Adrenal gland (tissue), 19 donors: ENCODE measurements at regions of chr16 and their contacts with region 1.

Region 1: DNA sequence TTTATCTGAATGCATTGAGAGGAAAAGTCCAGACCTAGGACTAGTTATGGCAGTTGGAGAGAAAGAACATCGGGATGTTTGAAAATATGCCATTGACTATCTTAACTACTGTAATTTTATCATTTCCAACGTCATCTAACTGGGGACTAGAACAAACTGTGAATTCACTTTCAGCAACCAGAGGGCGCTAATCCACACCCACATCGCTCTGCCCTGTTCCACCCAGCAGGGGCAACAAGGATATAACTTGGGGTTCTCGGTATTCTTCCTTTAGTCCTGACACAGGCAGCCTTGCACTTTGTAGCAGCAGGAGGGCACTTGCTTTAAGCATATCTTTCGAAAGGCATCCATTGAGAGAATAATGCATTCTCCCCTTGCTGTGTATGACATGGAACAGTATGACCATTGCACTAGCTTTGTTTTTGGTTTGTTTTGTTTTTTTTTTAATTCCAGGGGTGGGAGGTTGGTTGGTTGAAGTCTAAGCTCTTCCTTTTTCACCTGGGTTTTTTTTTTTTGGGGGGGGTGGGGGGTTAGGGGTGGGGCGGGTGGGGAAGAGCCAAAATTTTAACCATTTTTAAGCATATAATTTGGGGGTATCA is 31.5 kb downstream of the SIAH1 start:
- DNase-seq: peak; percentile 56 to 82 (median 69)
- H3K4me3 ChIP-seq: no peak overlapping the region
- H3K27ac ChIP-seq: no peak overlapping the region
- H3K4me1 ChIP-seq: peaks cover 0 to 16% of the 10 kb centered on the region in 2 donors
- H3K27me3 ChIP-seq: no peaks in the 10 kb centered on the region
- CTCF ChIP-seq: peak; percentile 73 to 99 (median 94)
- POLR2A ChIP-seq: no peak

Region 2: GRCh38 chr16:48609652-48610029 is 256.0 kb after region 1 on chr16:
- intact Hi-C with region 1: loop called in 1 of 2 experiments (anchors 10 kb)
- DNase-seq: peak; percentile 60 to 69 (median 61)
- H3K4me3 ChIP-seq: peak overlapping the region; percentile 9 to 92 (median 58)
- H3K27ac ChIP-seq: peak overlapping the region in 4 of 5 donors; percentile 80 to 99 (median 90)
- H3K4me1 ChIP-seq: peaks cover 15 to 42% of the 10 kb centered on the region in 2 donors
- H3K27me3 ChIP-seq: no peaks in the 10 kb centered on the region
- CTCF ChIP-seq: no peak
- POLR2A ChIP-seq: no peak

Region 3: GRCh38 chr16:48628359-48628985 is 274.8 kb after region 1 on chr16:
- intact Hi-C with region 1: loop called in 1 of 2 experiments (anchors 5 kb)
- DNase-seq: peak in 1 of 7 donors; percentile 37
- H3K4me3 ChIP-seq: no peak overlapping the region
- H3K27ac ChIP-seq: no peak overlapping the region
- H3K4me1 ChIP-seq: no peaks in the 10 kb centered on the region
- H3K27me3 ChIP-seq: no peaks in the 10 kb centered on the region
- CTCF ChIP-seq: no peak
- POLR2A ChIP-seq: no peak